ENCODE measurements at regions of chr1 and their contacts with region 1.

Region 1: DNA sequence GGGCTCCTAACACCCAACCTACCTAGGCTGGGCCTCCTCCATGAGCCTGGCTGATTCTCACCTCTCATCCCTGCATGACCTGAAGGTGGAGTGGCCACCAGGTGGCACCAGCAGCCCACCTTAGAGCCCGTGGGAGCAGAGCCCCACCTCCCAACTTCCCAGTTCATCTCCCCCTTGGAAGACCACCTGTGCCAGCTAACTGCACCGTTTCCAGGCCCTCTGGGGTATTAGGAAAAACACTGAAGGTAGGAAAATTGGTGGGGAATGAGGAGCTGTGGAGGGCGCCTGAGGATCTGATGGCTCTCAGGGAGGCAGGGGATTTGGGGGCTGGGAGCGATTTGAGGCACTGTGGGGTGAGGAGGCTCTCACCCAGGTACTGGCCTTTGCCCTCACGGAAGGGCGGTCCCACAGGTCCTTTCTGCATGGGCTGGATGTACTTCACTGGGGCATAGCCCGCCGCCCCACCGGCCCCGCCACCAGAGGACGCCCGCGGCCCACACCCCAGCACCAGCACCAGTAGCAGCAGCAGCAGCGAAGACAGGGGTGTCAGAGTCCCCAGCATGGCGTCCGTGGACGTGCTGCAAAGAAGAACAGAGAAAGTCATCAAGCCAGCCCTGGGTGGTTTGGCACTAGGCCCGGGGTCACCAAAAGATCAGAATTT is 11.1 kb downstream of the ADPRS start:
- DNase-seq: peak; percentile 91
- CTCF ChIP-seq: peak; percentile 92

Region 2: GRCh38 chr1:35915693-35916092 is 184.1 kb before region 1 on chr1:
- in situ Hi-C with region 1: no loop called
- DNase-seq: no peak
- CTCF ChIP-seq: no peak

Region 3: GRCh38 chr1:35971601-35972000 is 128.2 kb before region 1 on chr1:
- in situ Hi-C with region 1: no loop called
- DNase-seq: no peak
- CTCF ChIP-seq: no peak

Region 4: GRCh38 chr1:36187800-36188593 is 88.2 kb after region 1 on chr1:
- in situ Hi-C with region 1: loop called (anchors 10 kb)
- DNase-seq: peak; percentile 86
- CTCF ChIP-seq: peak; percentile 88

Measured in GM13977 (cell line).